Activated naive CD4-positive, alpha-beta T cell treated with anti-CD3 and anti-CD28 coated beads for 36 hours (primary cell): ENCODE measurements at regions of chr22 and their contacts with region 1.

Region 1: DNA sequence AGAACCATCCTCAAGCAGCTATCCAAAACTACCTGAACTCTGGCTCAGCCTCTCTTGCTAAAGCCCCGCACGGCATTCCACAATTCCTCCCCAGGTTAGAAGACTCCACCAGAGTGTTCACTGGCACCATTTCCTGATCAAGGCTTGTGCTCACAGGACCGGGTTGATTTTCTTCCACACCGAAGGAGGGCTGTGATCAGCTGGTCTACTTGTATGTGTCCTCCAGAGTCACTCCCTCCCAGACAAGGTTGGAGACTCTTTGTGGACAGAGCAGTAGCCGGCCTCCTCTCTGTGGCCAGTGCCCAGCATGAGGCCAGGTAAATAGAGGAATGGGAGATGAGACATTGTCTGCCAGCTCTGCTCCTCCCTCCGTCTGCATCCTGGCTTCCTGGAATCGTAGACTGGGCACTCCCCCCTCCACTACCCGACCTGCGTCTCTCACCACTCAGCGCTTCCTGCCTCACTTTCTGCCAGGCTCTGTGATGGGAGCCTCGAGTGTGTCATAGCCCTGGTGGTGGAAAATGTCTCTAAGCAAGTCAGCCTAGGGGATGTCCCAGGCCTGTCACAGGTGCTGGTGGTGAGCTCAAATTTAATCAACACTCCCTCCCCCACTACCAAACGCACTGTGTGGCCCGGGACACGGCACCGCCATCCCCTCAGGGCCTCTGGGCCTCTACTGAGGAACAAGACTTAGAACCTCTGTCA is 12.5 kb upstream of the TMPRSS6 start:
- DNase-seq: peak; percentile 98
- H3K4me3 Mint-ChIP-seq: peak overlapping the region; percentile 85
- H3K27ac Mint-ChIP-seq: peak overlapping the region; percentile 99
- H3K4me1 Mint-ChIP-seq: peaks cover 73% of the 10 kb centered on the region
- H3K27me3 Mint-ChIP-seq: no peaks in the 10 kb centered on the region

Region 2: GRCh38 chr22:37138849-37139561 is 17.0 kb after region 1 on chr22:
- CTCF ChIA-PET with region 1: interaction called, 5 read pairs
- intact Hi-C with region 1: loop called (anchors 1 kb)
- DNase-seq: peak; percentile 50
- H3K4me3 Mint-ChIP-seq: peak overlapping the region; percentile 57
- H3K27ac Mint-ChIP-seq: peak overlapping the region; percentile 95
- H3K4me1 Mint-ChIP-seq: peaks cover 51% of the 10 kb centered on the region
- H3K27me3 Mint-ChIP-seq: no peaks in the 10 kb centered on the region

Region 3: GRCh38 chr22:37148742-37149665 is 27.0 kb after region 1 on chr22:
- CTCF ChIA-PET with region 1: interaction called, 42 read pairs
- intact Hi-C with region 1: loop called (anchors 1 kb)
- DNase-seq: no peak
- H3K4me3 Mint-ChIP-seq: peak overlapping the region; percentile 87
- H3K27ac Mint-ChIP-seq: peak overlapping the region; percentile 96
- H3K4me1 Mint-ChIP-seq: peaks cover 53% of the 10 kb centered on the region
- H3K27me3 Mint-ChIP-seq: no peaks in the 10 kb centered on the region

Region 4: DNA sequence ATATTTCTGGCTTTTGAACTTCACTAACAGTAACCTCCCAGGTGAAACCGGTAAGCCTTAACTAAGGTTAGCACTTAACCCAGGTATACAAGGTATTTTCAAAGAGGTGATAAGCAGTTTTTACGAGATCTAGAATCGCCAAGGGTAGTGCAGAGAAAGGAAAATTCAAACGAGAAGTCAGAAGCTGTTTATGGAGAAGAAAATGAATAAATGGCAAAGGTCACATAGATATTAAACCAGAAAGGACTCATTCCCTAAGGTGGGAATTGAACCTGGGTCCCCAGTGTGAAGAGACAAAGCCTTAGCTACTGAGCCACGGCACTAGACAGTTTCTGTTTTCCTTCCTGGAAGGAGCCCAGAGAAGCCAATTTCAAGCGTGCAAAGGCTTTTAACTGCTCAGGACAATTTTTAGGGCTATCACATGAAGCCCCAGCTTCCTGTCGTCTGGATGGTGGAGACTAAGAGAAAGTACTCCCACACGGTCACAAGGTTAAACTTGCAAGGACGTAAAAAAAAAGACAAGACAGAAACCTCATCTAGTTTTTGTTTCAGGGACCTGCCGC is 71.7 kb after region 1 on chr22:
- CTCF ChIA-PET with region 1: interaction called, 29 read pairs
- intact Hi-C with region 1: loop called (anchors 1 kb)
- DNase-seq: peak; percentile 61
- H3K4me3 Mint-ChIP-seq: peak overlapping the region; percentile 14
- H3K27ac Mint-ChIP-seq: peak overlapping the region; percentile 65
- H3K4me1 Mint-ChIP-seq: peaks cover 45% of the 10 kb centered on the region
- H3K27me3 Mint-ChIP-seq: no peaks in the 10 kb centered on the region